ENCODE measurements at regions of chr3 and their contacts with region 1.

Region 1: GRCh38 chr3:30199096-30199759 is 407.2 kb upstream of the TGFBR2 start:
- DNase-seq: peak; percentile 32 to 38
- ATAC-seq: peak; percentile 41 to 60
- H3K4me3 ChIP-seq: no peak overlapping the region
- H3K27ac ChIP-seq: no peak overlapping the region
- H3K4me1 ChIP-seq: peaks cover 0 to 27% of the 10 kb centered on the region in 2 donors
- H3K27me3 ChIP-seq: no peaks in the 10 kb centered on the region
- CTCF ChIP-seq: peak; percentile 73 to 91 (median 82)
- POLR2A ChIP-seq: no peak

Region 2: DNA sequence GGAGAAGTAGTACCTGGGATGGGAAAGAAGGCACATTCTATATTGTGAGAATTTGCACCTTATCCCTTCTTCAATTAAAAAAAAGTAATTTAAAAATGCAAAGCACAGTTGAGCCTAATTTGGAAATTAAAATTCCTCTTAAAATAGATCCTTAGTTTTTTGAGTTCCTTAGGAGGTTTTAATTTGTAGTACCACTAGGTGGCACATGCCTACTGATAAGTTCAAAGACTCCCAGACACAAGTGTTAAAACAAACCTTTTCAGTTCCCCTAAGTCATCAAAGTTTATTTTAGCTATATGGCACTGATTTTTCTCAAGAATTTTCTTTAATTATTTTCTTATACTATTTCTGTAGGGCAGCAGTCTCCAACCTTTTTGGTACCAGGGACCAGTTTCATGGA is 1723.0 kb before region 1 on chr3:
- in situ Hi-C with region 1: no loop called
- intact Hi-C with region 1: loop called (anchors 10 kb)
- DNase-seq: no peak
- ATAC-seq: peak in 1 of 2 donors; percentile 55
- H3K4me3 ChIP-seq: no peak overlapping the region
- H3K27ac ChIP-seq: no peak overlapping the region
- H3K4me1 ChIP-seq: no peaks in the 10 kb centered on the region
- H3K27me3 ChIP-seq: no peaks in the 10 kb centered on the region
- CTCF ChIP-seq: peak in 4 of 5 experiments; percentile 39 to 63 (median 45)
- POLR2A ChIP-seq: no peak

Region 3: DNA sequence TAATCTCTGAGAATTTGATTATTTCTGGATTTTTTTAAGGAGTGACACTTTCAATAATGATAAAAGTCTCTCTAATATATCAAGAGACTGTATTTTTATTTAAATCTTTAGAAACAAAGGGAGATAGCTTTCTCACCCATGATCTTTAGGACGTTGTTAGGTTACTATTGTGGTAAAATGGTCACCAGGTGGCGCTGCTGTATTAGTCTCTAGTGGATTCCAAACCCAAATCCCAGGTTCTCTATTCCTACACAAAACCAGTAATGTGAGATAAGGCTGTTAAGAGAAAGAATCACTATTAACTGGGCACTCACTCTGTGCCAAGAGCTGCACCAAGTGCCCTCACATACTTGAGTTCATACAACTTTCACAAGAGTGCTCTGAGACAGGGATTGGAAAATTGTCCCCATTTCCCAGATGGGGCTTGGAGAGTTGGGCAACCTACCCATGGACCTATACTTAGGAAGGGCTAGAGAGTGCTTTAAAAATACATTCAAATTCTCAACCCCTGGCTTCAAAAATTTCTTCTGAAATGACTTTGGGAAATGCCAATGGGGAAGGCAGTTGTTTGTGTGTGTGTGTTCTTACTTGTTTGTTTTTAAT is 186.2 kb before region 1 on chr3:
- in situ Hi-C with region 1: no loop called
- intact Hi-C with region 1: loop called (anchors 1 kb)
- DNase-seq: peak; percentile 7 to 32
- ATAC-seq: peak; percentile 36 to 56
- H3K4me3 ChIP-seq: no peak overlapping the region
- H3K27ac ChIP-seq: no peak overlapping the region
- H3K4me1 ChIP-seq: peaks cover 0 to 5% of the 10 kb centered on the region in 2 donors
- H3K27me3 ChIP-seq: no peaks in the 10 kb centered on the region
- CTCF ChIP-seq: peak in 4 of 5 experiments; percentile 47 to 68 (median 53)
- POLR2A ChIP-seq: no peak

Region 4: DNA sequence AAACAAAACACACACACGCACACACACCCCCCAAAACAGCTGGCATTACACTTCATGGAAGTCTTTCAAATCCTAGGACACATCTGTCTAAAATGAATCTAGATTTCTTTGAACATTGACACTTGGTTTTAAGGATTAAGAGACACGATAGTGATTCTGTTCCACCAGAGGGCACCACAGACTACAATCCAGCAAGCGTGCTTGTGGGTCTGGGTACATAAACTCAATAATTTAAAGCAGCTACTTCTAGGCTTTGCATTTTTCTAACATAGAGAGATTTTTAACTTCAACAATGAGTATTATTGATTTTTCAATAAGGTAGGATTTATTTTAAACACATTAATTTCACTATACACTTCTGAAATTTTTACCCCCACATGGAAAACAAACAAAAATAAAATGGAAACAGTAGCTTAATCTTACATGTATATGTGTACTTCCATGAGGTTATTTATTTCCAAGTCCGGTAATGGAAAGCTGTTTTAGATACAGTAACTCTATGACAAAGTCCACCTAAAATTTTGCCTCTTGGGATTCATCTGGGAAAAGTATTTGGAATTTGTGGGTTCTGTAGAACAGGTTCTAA is 156.9 kb before region 1 on chr3:
- in situ Hi-C with region 1: loop called (anchors 5 to 10 kb)
- intact Hi-C with region 1: loop called (anchors 1 kb)
- DNase-seq: peak; percentile 18 to 23
- ATAC-seq: peak in 1 of 2 donors; percentile 46
- H3K4me3 ChIP-seq: no peak overlapping the region
- H3K27ac ChIP-seq: no peak overlapping the region
- H3K4me1 ChIP-seq: peaks cover 0 to 4% of the 10 kb centered on the region in 2 donors
- H3K27me3 ChIP-seq: no peaks in the 10 kb centered on the region
- CTCF ChIP-seq: peak; percentile 63 to 78 (median 72)
- POLR2A ChIP-seq: no peak

Region 5: DNA sequence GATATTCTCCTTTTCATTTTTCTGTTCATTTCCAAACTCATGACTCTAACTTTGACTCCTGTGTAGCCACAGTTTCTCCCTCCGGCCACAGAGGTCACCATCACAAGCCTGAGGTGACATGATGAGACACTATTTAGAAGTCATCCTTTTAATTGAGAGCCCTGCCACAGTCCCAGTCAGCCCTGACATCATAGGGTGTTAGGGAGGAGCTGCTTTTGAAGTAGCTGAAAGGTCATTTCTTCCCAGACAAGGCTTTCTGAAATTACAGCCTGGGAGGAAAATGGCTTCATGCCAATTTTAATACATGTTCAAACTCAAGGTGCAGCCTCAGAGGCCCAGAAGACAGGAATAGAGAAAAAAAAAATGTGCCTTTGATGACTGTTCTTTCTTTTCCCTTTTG is 125.6 kb before region 1 on chr3:
- in situ Hi-C with region 1: no loop called
- intact Hi-C with region 1: no loop called
- DNase-seq: no peak
- ATAC-seq: no peak
- H3K4me3 ChIP-seq: no peak overlapping the region
- H3K27ac ChIP-seq: no peak overlapping the region
- H3K4me1 ChIP-seq: peaks cover 0 to 3% of the 10 kb centered on the region in 2 donors
- H3K27me3 ChIP-seq: no peaks in the 10 kb centered on the region
- CTCF ChIP-seq: no peak
- POLR2A ChIP-seq: no peak

Region 6: GRCh38 chr3:30124435-30125395 is 74.5 kb before region 1 on chr3:
- in situ Hi-C with region 1: loop called in 2 of 4 experiments (anchors 5 to 10 kb)
- intact Hi-C with region 1: no loop called
- DNase-seq: no peak
- ATAC-seq: no peak
- H3K4me3 ChIP-seq: no peak overlapping the region
- H3K27ac ChIP-seq: no peak overlapping the region
- H3K4me1 ChIP-seq: no peaks in the 10 kb centered on the region
- H3K27me3 ChIP-seq: no peaks in the 10 kb centered on the region
- CTCF ChIP-seq: no peak
- POLR2A ChIP-seq: no peak